T-cell (primary cell): ENCODE measurements at regions of chr22 and their contacts with region 1.

Region 1: GRCh38 chr22:44331881-44332714 is 19.3 kb upstream of the SHISAL1 start:
- DNase-seq: peak in 2 of 35 experiments; percentile 7 to 15
- ATAC-seq: no peak
- H3K4me3 ChIP-seq: peak overlapping the region in 1 of 2 donors; percentile 5
- H3K4me3 Mint-ChIP-seq: peak overlapping the region; percentile 42 to 61 (median 43)
- H3K27ac ChIP-seq: no peak overlapping the region
- H3K27ac Mint-ChIP-seq: no peak overlapping the region
- H3K4me1 ChIP-seq: peaks cover 0 to 18% of the 10 kb centered on the region in 2 experiments
- H3K4me1 Mint-ChIP-seq: peaks cover 0 to 15% (median 13%) of the 10 kb centered on the region in 3 donors
- H3K27me3 ChIP-seq: peaks cover 0 to 85% of the 10 kb centered on the region in 2 experiments
- H3K27me3 Mint-ChIP-seq: peaks cover 17 to 38% of the 10 kb centered on the region in 2 donors

Region 2: GRCh38 chr22:45268167-45268957 is 936.3 kb after region 1 on chr22:
- CTCF ChIA-PET with region 1: interaction called in 1 of 2 experiments, 12 read pairs
- POLR2A ChIA-PET with region 1: no interaction called
- DNase-seq: peak in 3 of 35 experiments; percentile 10 to 33 (median 17)
- ATAC-seq: peak; percentile 6 to 34 (median 17)
- H3K4me3 ChIP-seq: peak overlapping the region; percentile 70 to 94
- H3K4me3 Mint-ChIP-seq: peak overlapping the region; percentile 73 to 85 (median 79)
- H3K27ac ChIP-seq: no peak overlapping the region
- H3K27ac Mint-ChIP-seq: no peak overlapping the region
- H3K4me1 ChIP-seq: peaks cover 4 to 17% of the 10 kb centered on the region in 2 experiments
- H3K4me1 Mint-ChIP-seq: peaks cover 10 to 20% (median 17%) of the 10 kb centered on the region in 3 donors
- H3K27me3 ChIP-seq: peaks cover 0 to 47% of the 10 kb centered on the region in 2 experiments
- H3K27me3 Mint-ChIP-seq: peaks cover 6 to 11% of the 10 kb centered on the region in 2 donors